Activated CD4-positive, alpha-beta T cell treated with anti-CD3 and anti-CD28 coated beads, Interleukin-2, amount 10 ng/mL, durations not matched to agents 24 days and 14 days (primary cell): ENCODE measurements at regions of chr5 and their contacts with region 1.

Region 1: DNA sequence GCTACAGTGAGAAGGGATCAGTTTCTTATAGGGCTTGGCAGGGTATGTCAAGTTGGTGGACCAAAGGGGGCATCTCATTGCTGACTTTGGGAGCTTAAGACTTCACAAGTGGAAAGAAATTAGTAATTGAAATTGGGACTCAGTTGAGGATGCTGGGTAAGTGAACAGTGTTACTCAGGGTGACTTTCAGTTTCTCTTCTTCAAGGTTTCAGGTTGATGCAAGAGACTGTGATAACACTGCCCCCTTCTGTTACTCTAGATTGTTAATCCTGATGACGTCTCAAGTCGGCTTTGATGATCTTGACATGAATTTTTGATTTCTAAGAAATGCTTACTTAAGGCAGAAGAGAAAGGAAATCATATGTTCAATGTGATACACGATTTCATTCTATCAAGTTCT is 21.3 kb downstream of the KCTD16 start:
- DNase-seq: peak; percentile 87
- H3K4me3 Mint-ChIP-seq: no peak overlapping the region
- H3K27ac Mint-ChIP-seq: no peak overlapping the region
- H3K4me1 Mint-ChIP-seq: peaks cover 39% of the 10 kb centered on the region
- H3K27me3 Mint-ChIP-seq: peaks cover 2% of the 10 kb centered on the region

Region 2: DNA sequence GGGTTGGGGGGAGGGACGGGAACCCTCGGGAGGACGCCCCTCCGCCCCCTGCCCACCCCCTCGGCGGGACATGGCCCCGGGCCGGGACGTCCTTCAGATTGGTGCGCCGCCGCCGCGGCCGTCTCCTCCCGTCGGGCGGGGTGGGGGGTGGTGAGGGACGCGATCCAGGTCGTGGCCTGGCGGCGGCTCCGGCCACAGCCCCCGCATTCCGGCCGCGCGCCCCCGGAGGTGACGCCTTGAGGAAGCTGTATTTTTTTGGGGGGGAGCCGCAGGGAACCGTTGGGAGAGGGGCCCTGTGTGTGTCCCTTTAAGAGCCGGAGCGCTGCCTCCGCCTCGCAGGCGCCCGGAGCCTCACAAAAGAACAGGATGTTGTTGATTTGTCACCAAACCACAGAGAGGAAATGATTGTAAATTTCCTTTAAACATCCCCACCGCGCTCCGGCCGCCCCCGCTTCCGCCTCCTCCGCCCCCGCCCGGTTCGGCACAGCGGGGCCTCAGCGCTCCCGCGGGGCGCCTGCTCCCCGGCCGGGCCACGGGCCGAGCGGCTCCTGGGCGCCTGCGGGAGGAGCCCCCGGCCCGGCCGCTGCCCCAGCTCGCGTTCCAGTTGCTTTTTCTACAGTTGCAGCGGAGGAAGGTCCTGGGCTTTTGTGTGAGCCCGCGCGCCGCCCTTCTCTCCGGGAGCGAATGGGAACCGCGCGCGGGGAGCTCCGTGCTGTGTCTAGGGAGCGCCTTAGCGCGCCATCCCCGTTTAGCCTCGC is 1835.1 kb before region 1 on chr5:
- intact Hi-C with region 1: loop called (anchors 10 kb)
- DNase-seq: peak; percentile 97
- H3K4me3 Mint-ChIP-seq: peak overlapping the region; percentile 79
- H3K27ac Mint-ChIP-seq: peak overlapping the region; percentile 94
- H3K4me1 Mint-ChIP-seq: peaks cover 40% of the 10 kb centered on the region
- H3K27me3 Mint-ChIP-seq: peaks cover 3% of the 10 kb centered on the region

Region 3: DNA sequence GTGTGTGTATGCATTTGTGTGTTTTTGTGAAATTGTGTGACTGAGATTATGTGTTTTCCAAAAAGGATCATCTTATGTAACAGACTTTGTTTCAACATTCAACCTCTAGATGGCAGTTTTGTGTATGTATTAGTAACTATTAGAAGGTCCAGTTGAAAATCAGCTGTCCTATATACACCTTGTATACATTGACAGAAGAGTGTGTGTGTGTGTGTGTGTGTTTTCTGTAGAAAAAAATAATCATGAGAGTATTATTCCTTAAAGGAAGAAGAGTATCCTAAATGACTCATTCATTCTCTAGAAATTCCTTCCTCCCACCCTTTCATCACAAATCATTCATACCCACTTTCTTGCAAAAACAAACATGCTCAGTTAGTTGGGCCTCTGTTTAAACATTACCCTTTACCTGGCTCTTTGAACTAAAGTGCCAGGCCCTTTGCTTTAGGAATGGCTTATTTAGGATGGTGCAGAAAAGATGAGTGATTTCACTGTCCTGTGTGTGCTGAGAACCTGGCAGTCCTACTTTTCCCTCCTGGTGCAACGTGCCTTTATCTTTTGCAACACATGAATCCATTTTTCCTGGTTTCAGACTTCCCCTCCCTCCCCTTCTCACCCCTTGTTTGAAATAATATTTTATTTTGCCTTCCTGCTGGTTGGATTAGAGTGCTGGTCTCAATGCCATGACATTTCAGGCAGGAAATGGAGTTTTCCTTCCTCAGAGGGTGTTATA is 1269.6 kb before region 1 on chr5:
- intact Hi-C with region 1: loop called (anchors 5 kb)
- DNase-seq: no peak
- H3K4me3 Mint-ChIP-seq: no peak overlapping the region
- H3K27ac Mint-ChIP-seq: no peak overlapping the region
- H3K4me1 Mint-ChIP-seq: peaks cover 36% of the 10 kb centered on the region
- H3K27me3 Mint-ChIP-seq: no peaks in the 10 kb centered on the region

Region 4: DNA sequence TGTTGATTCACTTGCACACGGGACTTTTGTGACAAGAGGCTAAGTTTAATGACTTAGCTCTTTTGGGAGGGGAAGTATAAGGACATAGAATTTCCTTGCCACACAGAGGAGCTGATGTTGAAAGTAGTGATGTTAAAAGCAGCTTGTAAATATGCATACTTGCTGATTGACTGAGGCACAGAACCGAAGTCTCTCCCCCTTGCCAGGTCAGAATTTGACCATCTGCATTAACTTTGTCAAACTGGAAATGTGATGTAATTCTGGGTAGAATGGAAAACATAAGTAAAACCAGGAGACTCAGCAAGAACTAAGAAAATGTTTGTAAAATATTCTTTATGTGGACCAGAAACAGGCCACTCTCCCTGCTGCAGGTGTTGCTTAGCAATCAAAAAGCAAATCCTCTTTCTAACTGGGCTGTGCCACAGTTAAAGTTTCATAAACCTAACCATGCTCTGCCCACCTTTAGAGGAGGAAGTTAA is 1072.7 kb before region 1 on chr5:
- intact Hi-C with region 1: loop called (anchors 5 kb)
- DNase-seq: no peak
- H3K4me3 Mint-ChIP-seq: no peak overlapping the region
- H3K27ac Mint-ChIP-seq: peak overlapping the region; percentile 68
- H3K4me1 Mint-ChIP-seq: peaks cover 32% of the 10 kb centered on the region
- H3K27me3 Mint-ChIP-seq: no peaks in the 10 kb centered on the region

Region 5: DNA sequence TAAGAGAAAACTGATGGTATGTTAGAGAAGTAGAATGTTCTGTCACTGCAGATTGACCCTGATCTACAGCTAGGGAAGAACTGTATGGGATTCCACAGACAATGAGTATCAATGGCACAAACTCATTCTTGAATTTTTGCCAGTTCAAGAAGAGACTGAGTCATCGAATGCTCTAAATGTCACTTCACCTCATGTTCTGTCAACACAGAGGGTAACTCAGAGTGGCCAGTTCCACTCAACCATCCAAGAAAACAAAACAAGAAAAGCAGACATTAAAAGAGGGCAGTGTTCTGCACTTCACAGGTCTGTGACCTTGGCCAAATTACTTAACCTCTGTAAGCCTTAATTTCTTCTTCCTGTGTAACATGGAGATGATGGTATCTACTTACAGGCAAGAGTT is 512.2 kb before region 1 on chr5:
- intact Hi-C with region 1: loop called (anchors 10 kb)
- DNase-seq: no peak
- H3K4me3 Mint-ChIP-seq: no peak overlapping the region
- H3K27ac Mint-ChIP-seq: peak overlapping the region; percentile 72
- H3K4me1 Mint-ChIP-seq: peaks cover 18% of the 10 kb centered on the region
- H3K27me3 Mint-ChIP-seq: peaks cover 4% of the 10 kb centered on the region

Region 6: DNA sequence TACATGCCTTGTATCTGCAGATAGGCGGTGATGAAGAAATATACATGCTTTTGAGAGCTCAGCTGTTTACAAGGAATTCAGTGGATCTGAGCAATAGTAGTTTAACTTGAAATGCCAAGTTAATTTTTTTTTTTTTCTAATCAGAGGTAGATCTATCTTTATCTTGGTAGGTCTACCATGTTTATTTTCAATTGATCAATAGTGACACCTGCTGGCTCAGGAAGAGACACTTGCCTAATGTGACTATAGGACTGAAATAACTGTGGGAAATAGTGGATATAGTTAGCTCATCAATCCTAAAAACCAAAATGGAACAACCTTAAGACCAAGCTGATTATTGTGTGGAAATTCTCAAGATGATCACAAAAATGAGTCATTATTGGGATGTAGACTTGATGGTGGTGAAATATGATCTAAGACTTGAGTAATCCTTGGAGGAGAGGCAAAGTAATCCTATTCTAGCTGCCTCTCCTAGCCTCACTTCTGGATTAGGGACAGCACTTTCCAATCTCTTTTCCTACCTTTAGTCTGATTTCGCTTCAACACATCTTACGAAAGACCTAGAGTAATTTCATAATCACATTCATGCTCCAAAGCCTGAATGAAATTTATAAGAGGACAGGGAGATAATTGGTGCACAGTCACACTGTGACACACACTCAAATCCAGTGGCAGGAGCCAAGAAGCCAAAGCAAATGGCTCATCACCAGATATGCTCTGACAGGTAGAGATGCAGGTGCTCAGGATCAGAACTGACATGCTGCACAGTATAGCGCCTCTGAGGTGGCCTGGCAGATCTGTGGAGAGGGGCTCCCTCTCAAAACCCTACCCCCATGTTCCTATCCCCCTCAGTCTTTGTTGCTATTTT is 223.8 kb before region 1 on chr5:
- intact Hi-C with region 1: loop called (anchors 5 kb)
- DNase-seq: peak; percentile 74
- H3K4me3 Mint-ChIP-seq: no peak overlapping the region
- H3K27ac Mint-ChIP-seq: no peak overlapping the region
- H3K4me1 Mint-ChIP-seq: peaks cover 3% of the 10 kb centered on the region
- H3K27me3 Mint-ChIP-seq: peaks cover 34% of the 10 kb centered on the region

Region 7: GRCh38 chr5:145946112-145946861 is 1754.3 kb after region 1 on chr5:
- intact Hi-C with region 1: loop called (anchors 2 kb)
- DNase-seq: peak; percentile 74
- H3K4me3 Mint-ChIP-seq: no peak overlapping the region
- H3K27ac Mint-ChIP-seq: peak overlapping the region; percentile 1
- H3K4me1 Mint-ChIP-seq: peaks cover 26% of the 10 kb centered on the region
- H3K27me3 Mint-ChIP-seq: peaks cover 29% of the 10 kb centered on the region